ENCODE measurements at regions of chr19 and their contacts with region 1.

Region 1: DNA sequence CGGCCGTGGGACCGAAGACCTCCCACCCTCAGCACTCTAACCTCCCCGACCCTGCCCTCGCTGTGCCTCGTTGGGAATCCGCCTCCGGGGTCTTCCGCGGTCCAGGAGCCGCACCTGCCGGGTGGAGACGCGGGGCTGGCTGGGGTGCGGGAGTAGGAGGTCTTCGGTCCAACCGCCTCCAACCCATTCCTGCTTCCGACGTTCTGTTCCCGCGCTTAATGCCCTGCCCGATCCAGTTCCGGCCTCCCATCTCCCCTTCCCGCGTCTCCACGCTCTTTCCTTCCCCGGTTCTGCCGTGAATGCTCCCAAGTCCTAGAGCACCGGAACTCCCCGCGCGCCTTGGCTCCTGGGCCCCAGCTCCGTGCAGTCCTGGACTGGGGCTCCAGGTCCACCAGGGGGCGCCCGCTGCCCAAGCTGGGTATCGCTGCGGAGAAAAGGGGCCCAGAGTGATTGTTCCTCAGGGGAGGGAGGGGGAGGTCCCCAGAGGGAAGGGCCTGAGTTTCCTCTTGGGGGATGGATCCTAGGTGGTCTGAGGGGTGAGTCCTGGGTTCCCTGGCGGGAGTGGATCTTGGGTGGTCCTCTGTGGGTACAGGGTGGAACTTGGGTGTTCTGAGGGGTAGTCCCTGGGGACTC is 14.1 kb upstream of the TNFSF9 start:
- DNase-seq: peak; percentile 94
- H3K4me3 Mint-ChIP-seq: peak overlapping the region; percentile 89
- H3K27ac Mint-ChIP-seq: peak overlapping the region; percentile 89
- H3K4me1 Mint-ChIP-seq: peaks cover 34% of the 10 kb centered on the region
- H3K27me3 Mint-ChIP-seq: peaks cover 23% of the 10 kb centered on the region

Region 2: DNA sequence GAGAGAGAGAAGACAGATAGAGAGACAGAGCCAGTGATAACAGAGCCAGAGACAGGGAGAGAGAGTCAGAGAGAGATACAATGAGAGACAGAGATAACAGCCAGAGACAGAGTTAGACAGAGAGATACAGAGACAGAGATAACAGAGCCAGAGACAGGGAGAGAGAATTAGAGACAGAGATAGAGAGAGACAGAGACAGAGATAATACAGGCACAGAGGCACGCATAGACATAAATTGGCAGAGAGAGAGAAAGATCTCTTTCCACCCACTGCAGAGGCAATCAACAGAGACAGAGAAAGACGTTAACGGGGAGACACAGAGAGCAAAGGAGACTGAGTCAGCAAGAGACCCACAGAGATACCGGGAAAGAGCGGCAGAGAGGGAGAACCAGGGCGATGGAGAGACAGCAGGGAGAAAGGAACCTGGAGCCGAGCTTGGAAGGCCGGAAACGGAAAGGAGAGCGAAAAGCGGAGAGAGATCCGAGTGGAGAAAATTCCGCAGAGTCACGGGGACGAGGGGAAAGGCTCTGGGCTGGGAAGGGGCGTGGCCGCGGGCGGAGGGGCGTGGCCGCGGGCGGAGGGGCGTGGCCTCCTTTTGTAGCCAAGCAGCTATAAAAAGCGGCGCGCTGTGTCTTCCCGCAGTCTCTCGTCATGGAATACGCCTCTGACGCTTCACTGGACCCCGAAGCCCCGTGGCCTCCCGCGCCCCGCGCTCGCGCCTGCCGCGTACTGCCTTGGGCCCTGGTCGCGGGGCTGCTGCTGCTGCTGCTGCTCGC is 13.8 kb after region 1 on chr19 and contains the start of gene TNFSF9:
- CTCF ChIA-PET with region 1: no interaction called
- DNase-seq: peak; percentile 87
- H3K4me3 Mint-ChIP-seq: peak within 1 kb of the TSS; percentile 69
- H3K27ac Mint-ChIP-seq: no peak within 1 kb of the TSS
- H3K4me1 Mint-ChIP-seq: peaks cover 35% of the 10 kb centered on the region
- H3K27me3 Mint-ChIP-seq: peaks cover 78% of the 10 kb centered on the region

Region 3: DNA sequence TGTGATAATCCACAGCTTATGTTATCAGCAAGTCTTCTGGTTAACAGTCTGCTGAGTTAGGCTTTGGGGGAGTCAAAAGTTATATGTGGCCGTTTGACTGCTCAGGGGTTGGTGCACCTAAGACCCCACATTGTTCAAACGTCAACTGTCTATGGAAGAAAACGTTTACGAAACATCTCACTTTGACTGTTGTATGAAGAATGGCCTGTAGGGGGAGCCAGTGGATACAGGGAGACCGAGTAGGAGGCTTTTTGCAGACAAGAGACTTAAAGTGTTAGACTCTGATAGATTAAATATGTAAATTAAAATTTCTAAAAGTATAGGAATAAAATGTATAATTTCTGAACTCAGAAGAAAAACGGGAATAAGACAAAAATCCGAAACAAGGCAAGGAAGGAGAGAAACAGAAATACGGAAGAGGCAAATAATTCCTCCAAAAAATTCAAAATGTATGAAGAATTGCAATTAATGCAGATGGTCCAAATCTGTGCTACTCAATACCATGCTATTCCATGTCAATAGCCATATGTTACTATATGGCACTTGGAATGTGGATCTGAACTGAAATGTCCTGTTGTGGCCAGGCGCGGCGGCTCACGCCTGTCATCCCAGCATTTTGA is 115.3 kb after region 1 on chr19:
- CTCF ChIA-PET with region 1: interaction called, 15 read pairs
- DNase-seq: peak; percentile 86
- H3K4me3 Mint-ChIP-seq: no peak overlapping the region
- H3K27ac Mint-ChIP-seq: no peak overlapping the region
- H3K4me1 Mint-ChIP-seq: peaks cover 28% of the 10 kb centered on the region
- H3K27me3 Mint-ChIP-seq: peaks cover 7% of the 10 kb centered on the region

Region 4: GRCh38 chr19:6753178-6754031 is 236.6 kb after region 1 on chr19:
- CTCF ChIA-PET with region 1: interaction called, 10 read pairs
- DNase-seq: peak; percentile 86
- H3K4me3 Mint-ChIP-seq: peak overlapping the region; percentile 39
- H3K27ac Mint-ChIP-seq: peak overlapping the region; percentile 91
- H3K4me1 Mint-ChIP-seq: peaks cover 25% of the 10 kb centered on the region
- H3K27me3 Mint-ChIP-seq: no peaks in the 10 kb centered on the region

Region 5: DNA sequence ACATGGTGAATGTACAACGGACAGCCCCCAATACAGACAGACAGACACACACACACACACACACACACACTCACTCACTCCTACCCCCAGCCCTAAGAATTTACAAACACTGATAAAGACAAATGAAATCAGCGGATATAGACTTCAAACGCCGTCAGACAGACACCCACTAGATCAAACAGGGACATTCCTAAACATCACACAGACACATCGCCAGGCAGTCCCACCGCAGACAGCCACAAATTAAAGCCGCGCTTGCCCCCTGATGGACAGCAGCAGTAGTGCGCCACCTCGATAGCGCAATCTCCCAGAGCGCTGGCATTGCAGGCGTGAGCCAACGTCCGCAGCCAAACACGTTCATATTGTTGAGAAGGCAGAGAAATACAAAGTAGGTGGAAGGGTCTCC is 345.9 kb after region 1 on chr19:
- CTCF ChIA-PET with region 1: interaction called, 33 read pairs
- DNase-seq: peak; percentile 94
- H3K4me3 Mint-ChIP-seq: peak overlapping the region; percentile 75
- H3K27ac Mint-ChIP-seq: peak overlapping the region; percentile 86
- H3K4me1 Mint-ChIP-seq: peaks cover 27% of the 10 kb centered on the region
- H3K27me3 Mint-ChIP-seq: peaks cover 5% of the 10 kb centered on the region